BJ (cell line): ENCODE measurements at regions of chr15 and their contacts with region 1.

Region 1: DNA sequence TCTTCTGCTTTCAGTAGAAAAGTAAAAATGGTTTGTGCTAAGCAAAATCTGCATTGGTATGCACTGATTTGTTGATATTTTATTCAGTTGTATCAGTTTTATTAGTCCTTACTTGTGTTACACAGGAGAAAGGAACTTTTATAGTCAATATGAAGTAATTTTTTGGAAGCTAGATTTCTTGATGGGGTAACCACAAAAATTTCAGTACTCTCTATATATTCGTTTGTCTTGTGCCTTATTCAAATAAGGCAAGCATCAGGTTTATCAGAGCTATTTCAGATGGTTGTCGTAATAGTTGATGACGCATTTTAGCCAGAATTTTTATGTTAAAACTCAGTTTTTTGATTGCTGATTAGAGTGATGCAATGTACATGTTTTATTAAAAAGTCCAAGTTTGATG is 50.7 kb upstream of the NIPA1 start:
- DNase-seq: peak; percentile 87
- H3K4me3 ChIP-seq: no peak overlapping the region
- H3K27me3 ChIP-seq: no peaks in the 10 kb centered on the region
- CTCF ChIP-seq: no peak

Region 2: DNA sequence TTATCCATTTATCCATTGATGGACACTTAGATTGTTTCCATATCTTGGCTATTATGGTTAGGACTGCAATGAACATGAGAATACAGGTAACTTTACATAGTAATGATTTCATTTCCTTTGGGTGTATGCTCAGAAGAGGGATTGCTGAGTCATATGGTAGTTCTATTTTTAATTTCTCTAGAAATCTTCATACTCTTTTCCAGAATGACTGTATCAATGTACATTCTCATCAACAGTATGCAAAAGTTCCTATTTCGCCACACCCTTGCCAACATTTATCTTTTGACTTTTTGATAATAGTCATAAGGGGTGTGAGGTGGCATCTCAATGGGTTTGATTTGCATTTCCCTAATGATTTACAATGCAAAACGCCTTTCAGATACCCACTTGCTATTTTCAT is 44.5 kb after region 1 on chr15:
- CTCF ChIA-PET with region 1: no interaction called
- POLR2A ChIA-PET with region 1: no interaction called
- DNase-seq: no peak
- H3K4me3 ChIP-seq: no peak overlapping the region
- H3K27me3 ChIP-seq: no peaks in the 10 kb centered on the region
- CTCF ChIP-seq: no peak

Region 3: DNA sequence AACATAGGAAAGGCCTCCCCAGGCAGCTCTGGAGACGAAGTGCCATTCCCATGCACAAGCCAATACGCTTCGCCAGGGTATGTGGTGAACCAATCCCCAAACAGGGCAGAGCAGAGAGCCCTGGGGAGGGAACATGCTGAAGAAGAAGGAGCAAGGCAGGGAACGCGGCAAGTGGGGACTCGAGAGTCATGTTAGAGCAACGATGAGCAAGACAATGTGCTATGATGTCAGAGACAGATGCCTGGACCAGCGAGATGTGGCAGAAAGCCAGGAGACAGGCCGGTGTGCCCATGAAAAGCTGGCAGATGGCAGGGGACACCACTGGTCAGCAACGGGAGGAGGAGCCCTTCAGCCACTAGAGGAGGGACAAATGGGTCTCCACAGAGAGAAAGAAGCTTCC is 142.3 kb after region 1 on chr15:
- CTCF ChIA-PET with region 1: no interaction called
- POLR2A ChIA-PET with region 1: interaction called, 11 read pairs
- DNase-seq: no peak
- H3K4me3 ChIP-seq: no peak overlapping the region
- H3K27me3 ChIP-seq: no peaks in the 10 kb centered on the region
- CTCF ChIP-seq: no peak